BJ (cell line): ENCODE measurements at regions of chr1 and their contacts with region 1.

Region 1: GRCh38 chr1:153946622-153947241 is at the start of gene DENND4B:
- DNase-seq: no peak
- H3K4me3 ChIP-seq: peak within 1 kb of the TSS; percentile 56
- H3K27me3 ChIP-seq: no peaks in the 10 kb centered on the region
- CTCF ChIP-seq: peak; percentile 89
- polyA plus RNA-seq, gene DENND4B: 10.1 and 17.6 TPM in 2 replicates

Region 2: DNA sequence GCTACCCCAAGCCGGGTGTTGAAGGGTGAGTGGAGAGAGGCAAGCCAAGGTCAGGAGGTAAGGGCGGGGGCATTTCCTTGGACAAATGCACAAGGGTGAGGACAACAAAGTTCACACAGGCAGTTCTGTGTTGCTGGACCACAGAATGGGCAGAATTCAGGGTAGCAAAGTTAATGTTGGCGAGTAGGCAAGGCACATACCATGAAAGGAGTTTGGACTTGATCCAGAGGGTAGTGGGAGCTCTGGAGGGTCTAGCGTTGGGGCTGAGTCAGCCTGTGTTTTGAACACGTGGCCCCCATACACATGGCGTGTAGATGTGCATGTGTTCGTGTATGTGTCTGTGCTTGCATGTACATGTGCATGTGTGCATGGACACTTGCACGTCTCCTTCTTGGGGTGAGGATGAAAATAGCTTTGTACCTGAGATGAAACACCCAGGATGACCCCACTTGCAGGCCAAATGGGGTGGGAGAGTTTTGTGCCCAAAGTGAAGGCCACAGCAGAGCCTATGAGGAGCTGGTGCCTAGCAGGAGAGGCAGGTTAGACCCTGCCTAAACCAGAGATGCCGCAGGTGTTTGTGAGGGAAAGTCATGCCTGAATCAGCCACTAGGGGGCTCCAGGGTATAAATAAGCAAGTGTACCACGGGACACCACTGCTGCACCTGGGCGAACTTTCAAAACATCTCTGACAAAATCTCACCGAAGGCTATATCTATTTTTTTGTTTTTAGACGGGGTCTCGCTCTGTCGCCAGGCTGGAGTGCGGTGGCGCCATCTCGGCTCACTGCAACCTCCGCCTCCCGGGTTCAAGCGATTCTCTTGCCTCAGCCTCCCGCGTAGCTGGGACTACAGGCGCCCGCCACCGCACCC is 149.7 kb before region 1 on chr1:
- CTCF ChIA-PET with region 1: interaction called, 14 read pairs
- POLR2A ChIA-PET with region 1: no interaction called
- DNase-seq: no peak
- H3K4me3 ChIP-seq: no peak overlapping the region
- H3K27me3 ChIP-seq: no peaks in the 10 kb centered on the region
- CTCF ChIP-seq: peak; percentile 84

Region 3: DNA sequence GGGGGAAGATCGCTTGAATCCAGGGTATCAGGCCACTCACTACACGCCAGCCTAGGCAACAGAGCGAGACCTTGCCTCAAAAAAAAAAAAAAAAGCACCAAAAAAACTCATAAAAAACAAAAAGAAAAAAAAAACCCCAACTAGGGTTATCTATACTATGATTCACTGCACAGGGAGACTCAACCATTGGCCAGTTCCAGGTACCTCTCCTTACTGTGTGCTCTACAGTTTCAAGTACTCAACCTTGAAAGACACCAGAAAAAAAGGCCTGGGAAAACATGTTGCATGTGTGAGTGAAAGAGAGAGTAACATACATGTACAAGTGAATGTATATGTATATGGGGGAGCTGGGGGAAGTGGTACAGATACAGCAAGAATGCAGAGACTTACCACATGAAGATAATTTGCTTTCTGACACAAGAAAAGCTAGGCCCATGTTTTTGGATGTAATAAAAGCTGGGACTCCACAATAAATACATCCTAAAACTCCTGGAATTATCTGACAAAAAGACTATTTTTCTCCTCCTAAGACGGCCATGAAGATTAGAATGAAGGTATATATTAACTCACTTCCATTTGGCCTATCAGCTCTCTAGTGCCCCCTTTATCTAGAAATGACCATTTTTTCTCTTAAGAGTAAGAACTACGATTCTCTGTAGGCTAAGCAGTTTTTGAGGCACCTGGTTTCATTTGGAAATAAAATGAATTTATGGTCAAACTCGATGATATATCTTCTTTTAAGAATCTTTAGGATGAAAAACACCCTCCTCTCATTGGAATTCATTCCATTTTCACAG is 119.4 kb before region 1 on chr1:
- CTCF ChIA-PET with region 1: interaction called, 13 read pairs
- POLR2A ChIA-PET with region 1: no interaction called
- DNase-seq: no peak
- H3K4me3 ChIP-seq: no peak overlapping the region
- H3K27me3 ChIP-seq: no peaks in the 10 kb centered on the region
- CTCF ChIP-seq: no peak

Region 4: GRCh38 chr1:153922972-153923925 is 23.5 kb before region 1 on chr1 and contains the start of gene GATAD2B:
- CTCF ChIA-PET with region 1: interaction called, 13 read pairs
- POLR2A ChIA-PET with region 1: no interaction called
- DNase-seq: peak; percentile 98
- H3K4me3 ChIP-seq: peak within 1 kb of the TSS; percentile 76
- H3K27me3 ChIP-seq: no peaks in the 10 kb centered on the region
- CTCF ChIP-seq: no peak
- polyA plus RNA-seq, gene GATAD2B: 3.6 and 4.4 TPM in 2 replicates

Region 5: DNA sequence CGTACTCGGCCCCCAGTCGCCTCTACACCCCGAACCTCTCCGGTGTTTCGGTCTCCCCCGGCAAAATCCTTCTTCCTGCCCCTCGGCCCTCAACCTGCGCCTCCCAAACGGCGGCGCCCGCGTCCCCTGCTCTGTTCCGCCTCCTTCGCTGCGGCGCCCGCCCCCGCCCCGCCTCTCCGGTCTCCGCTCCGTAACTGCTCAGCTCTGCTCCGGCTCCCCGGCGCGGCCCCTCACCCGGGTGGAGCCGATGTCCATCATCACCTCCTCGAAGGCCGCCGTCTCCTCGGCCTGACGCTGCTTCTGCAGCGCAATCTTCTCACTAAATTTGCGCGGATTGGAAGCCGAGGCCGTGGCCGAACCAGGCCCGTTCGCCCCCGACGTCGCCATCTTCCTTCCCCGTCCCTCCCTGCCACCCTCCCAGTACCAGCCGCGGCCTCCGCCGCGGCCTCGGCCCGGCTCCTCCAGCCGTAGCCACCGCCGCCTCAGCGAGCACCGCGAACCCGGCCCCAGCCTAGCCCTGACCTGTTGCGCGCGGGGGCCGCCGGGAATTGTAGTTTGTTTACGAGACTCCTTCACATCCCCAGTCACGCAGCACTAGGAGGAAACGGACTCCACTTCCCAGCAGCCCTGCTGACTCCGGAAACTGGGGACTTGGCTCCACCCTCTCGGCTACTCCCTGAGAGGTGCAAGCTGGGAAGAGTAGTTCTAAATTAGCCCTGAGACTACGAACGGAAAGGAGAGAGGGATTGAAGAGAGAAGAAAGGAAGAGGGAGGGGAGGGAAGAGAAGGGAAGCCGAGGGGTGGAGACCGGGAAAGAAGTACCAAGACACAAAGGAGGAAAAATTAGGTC is 11.6 kb after region 1 on chr1 and contains the start of gene CRTC2:
- CTCF ChIA-PET with region 1: interaction called, 17 read pairs
- POLR2A ChIA-PET with region 1: no interaction called
- DNase-seq: peak; percentile 95
- H3K4me3 ChIP-seq: peak within 1 kb of the TSS; percentile 96
- H3K27me3 ChIP-seq: no peaks in the 10 kb centered on the region
- CTCF ChIP-seq: 0 out of 2 replicates have a peak, but pooled peaks have one; percentile 7
- polyA plus RNA-seq, gene CRTC2: 17.7 and 25.2 TPM in 2 replicates

Region 6: DNA sequence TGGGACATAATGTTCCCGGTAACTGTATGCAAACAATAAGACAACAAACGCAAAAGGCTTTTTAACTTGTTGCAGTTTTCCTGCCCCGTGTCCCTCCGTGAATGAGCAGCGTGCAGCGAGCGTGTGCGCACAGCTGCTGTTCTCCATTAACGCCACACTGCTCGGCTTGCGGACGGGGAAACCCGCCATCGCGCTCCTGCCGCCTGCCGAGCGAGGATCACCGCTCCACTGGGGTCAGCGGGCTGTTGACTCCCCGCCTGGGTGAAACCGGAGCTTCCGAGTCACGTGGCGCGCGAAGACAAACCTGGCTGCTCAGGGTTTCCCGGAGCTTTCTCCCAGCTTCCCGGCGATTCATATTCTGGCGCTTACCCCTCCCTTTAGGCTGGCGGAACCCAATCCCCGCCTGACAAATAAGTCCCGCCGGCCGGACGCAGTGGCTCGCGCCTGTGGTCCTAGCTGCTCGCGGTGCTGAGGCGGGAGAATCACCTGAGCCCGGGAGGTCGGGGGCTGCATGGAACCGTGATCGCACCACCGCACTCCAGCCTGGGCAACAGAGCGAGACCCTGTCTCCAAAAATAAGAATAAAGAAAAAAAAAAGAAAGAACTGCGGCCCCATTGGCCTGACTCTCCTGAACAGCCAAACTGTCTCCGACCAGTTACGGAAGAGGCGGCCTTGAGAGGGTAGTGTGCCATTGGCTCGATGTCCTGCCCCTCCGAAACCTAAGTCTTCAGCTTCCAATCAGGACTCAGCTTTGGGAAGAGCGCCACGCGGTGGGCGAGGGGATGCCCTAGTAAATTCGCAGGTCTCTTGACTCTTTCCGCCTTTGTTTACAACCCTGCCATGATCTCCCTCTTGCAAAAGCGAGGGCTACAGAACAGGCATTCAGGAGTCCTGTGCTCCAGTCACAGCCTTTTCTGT is 20.6 kb after region 1 on chr1 and contains the start of gene CREB3L4:
- CTCF ChIA-PET with region 1: interaction called, 17 read pairs
- POLR2A ChIA-PET with region 1: no interaction called
- DNase-seq: peak; percentile 88
- H3K4me3 ChIP-seq: peak within 1 kb of the TSS; percentile 53
- H3K27me3 ChIP-seq: no peaks in the 10 kb centered on the region
- CTCF ChIP-seq: peak; percentile 58
- polyA plus RNA-seq, gene CREB3L4: 8.0 and 8.7 TPM in 2 replicates

Region 7: GRCh38 chr1:154019940-154020339 is 73.2 kb after region 1 on chr1:
- CTCF ChIA-PET with region 1: no interaction called
- POLR2A ChIA-PET with region 1: no interaction called
- DNase-seq: no peak
- H3K4me3 ChIP-seq: no peak overlapping the region
- H3K27me3 ChIP-seq: no peaks in the 10 kb centered on the region
- CTCF ChIP-seq: no peak

Region 8: GRCh38 chr1:154093699-154094098 is 147.0 kb after region 1 on chr1:
- CTCF ChIA-PET with region 1: no interaction called
- POLR2A ChIA-PET with region 1: no interaction called
- DNase-seq: no peak
- H3K4me3 ChIP-seq: no peak overlapping the region
- H3K27me3 ChIP-seq: no peaks in the 10 kb centered on the region
- CTCF ChIP-seq: no peak